ENCODE measurements at regions of chr6 and their contacts with region 1.

Region 1: DNA sequence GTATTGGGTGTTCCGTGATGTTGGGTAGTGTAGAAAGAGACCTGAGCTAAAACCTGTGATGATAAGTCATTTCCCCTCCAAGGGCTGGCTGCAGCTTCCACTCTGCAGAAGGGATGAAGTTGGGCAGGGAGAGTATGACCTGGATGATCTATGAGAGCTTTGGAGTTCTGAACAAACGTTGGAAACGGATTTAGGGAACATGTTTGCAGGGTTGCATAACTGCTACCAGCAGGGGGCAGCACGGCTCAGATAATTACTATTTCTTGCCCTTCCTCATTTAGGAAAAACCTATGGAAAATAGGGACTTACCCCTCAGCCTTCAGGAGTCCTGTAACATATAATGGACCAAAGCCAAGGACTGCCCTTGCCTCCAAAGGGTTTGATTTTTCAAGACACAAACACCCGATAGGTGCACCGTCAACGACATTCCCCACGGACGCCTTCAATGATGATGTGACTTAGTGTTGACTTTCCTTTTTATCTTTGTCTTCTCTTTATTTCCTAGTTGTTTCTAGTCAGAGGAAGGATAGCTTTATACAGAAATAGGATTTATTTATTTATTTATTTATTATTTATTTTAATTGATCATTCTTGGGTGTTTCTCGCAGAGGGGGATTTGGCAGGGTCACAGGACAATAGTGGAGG is 164.9 kb upstream of the SASH1 start:
- DNase-seq: peak in 1 of 2 donors; percentile 21
- ATAC-seq: no peak
- H3K4me3 ChIP-seq: no peak overlapping the region
- H3K27ac ChIP-seq: no peak overlapping the region
- H3K4me1 ChIP-seq: no peaks in the 10 kb centered on the region
- H3K27me3 ChIP-seq: no peaks in the 10 kb centered on the region
- CTCF ChIP-seq: peak; percentile 43 to 76 (median 74)
- POLR2A ChIP-seq: no peak

Region 2: GRCh38 chr6:148027201-148027600 is 150.5 kb before region 1 on chr6:
- in situ Hi-C with region 1: no loop called
- intact Hi-C with region 1: no loop called
- DNase-seq: no peak
- ATAC-seq: no peak
- H3K4me3 ChIP-seq: no peak overlapping the region
- H3K27ac ChIP-seq: no peak overlapping the region
- H3K4me1 ChIP-seq: no peaks in the 10 kb centered on the region
- H3K27me3 ChIP-seq: no peaks in the 10 kb centered on the region
- CTCF ChIP-seq: no peak
- POLR2A ChIP-seq: no peak

Region 3: DNA sequence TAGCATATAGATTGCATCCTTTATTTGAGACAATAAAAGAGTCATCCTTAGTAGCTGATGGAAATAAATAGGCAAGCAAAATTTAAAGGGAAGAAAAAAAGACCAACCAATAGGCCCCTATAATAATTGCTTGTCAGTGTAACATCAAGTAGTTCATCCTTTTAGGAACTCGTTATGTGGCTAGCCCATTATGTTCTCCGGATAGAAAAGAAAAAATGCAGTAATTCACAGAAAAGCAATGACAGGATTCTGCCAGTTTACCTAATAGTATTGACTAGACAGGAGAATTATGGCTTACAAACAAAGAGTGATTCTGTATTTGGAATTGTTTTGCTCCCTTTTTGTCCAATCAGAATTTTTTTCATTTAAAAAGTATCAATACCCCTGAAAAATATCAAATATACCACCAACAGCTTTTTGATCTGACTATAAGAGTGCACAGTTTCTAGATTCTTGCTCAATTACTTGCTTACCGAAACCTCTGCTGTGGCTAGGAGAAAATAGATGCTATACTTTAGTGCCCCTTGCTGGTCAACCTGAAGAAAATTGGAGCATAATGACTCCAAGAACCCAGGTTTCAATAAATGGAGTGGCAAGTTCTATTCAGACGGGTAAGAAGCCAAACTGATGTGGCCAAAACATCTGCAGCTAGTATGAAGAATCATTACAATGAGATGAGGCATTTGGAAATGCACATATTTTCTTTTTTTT is 73.4 kb after region 1 on chr6:
- in situ Hi-C with region 1: loop called in 2 of 4 experiments (anchors 5 to 10 kb)
- intact Hi-C with region 1: loop called (anchors 1 kb)
- DNase-seq: no peak
- ATAC-seq: peak; percentile 46 to 86
- H3K4me3 ChIP-seq: no peak overlapping the region
- H3K27ac ChIP-seq: no peak overlapping the region
- H3K4me1 ChIP-seq: no peaks in the 10 kb centered on the region
- H3K27me3 ChIP-seq: no peaks in the 10 kb centered on the region
- CTCF ChIP-seq: peak in 3 of 5 experiments; percentile 19 to 37 (median 30)
- POLR2A ChIP-seq: no peak

Region 4: DNA sequence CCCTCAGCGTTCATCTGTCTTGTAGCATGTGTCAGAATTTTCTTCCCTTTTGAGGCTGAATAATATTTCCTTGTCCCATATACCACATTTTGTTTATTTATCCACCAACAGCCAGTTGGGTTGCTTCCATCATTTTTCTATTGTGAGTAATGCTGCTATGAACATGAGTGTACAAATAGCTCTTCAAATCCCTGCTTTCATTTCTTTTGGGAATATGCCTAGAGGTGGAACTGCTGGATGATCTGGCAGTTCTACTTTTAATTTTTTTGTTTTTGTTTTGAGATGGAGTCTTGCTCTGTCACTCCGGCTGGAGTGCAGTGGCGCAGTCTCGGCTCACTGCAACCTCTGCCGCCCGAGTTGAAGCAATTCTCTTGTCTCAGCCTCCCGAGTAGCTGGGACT is 229.7 kb after region 1 on chr6:
- in situ Hi-C with region 1: no loop called
- intact Hi-C with region 1: no loop called
- DNase-seq: peak in 1 of 2 donors; percentile 34
- ATAC-seq: peak; percentile 88
- H3K4me3 ChIP-seq: no peak overlapping the region
- H3K27ac ChIP-seq: peak overlapping the region; percentile 49 to 70 (median 67)
- H3K4me1 ChIP-seq: peaks cover 10 to 17% of the 10 kb centered on the region in 2 donors
- H3K27me3 ChIP-seq: no peaks in the 10 kb centered on the region
- CTCF ChIP-seq: no peak
- POLR2A ChIP-seq: no peak

Region 5: DNA sequence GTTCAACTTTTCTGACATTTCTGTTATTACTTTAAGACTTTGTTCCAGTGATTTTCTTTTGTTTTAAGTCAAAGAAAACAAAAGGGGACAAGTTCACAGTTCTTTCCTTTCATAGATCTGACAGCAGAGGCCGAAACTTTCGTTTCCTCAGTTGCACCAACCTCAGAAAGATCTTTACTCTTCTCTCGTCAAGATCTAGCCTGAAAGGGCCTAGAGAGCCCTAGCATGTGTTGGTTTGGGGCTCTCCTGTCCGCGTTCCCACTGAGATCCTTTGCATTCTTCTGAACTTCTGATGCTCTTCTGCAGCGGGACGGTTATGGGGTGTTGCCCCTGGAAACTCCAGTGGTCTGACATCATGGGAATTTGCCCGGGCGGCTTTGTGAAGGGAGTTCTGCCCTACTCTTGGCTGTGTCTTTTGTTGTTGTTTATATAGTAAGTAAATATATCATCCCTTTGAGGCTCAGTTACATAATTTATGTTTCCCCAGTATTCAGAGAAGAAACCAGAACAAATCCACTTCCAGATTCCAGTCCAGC is 294.0 kb after region 1 on chr6:
- in situ Hi-C with region 1: loop called (anchors 5 to 10 kb)
- intact Hi-C with region 1: no loop called
- DNase-seq: no peak
- ATAC-seq: peak; percentile 18
- H3K4me3 ChIP-seq: no peak overlapping the region
- H3K27ac ChIP-seq: peak overlapping the region; percentile 45 to 68 (median 62)
- H3K4me1 ChIP-seq: peaks cover 0 to 3% of the 10 kb centered on the region in 2 donors
- H3K27me3 ChIP-seq: no peaks in the 10 kb centered on the region
- CTCF ChIP-seq: no peak
- POLR2A ChIP-seq: no peak